PC-3 (cell line): ENCODE measurements at regions of chr10 and their contacts with region 1.

Region 1: GRCh38 chr10:10804998-10805740 is 212.5 kb upstream of the CELF2 start:
- DNase-seq: peak; percentile 67
- ATAC-seq: peak; percentile 89
- H3K4me3 ChIP-seq: no peak overlapping the region
- H3K27ac ChIP-seq: peak overlapping the region; percentile 53
- H3K4me1 ChIP-seq: peaks cover 9% of the 10 kb centered on the region; the same call in 1 of the 2 replicates
- H3K27me3 ChIP-seq: no peaks in the 10 kb centered on the region
- CTCF ChIP-seq: no peak

Region 2: DNA sequence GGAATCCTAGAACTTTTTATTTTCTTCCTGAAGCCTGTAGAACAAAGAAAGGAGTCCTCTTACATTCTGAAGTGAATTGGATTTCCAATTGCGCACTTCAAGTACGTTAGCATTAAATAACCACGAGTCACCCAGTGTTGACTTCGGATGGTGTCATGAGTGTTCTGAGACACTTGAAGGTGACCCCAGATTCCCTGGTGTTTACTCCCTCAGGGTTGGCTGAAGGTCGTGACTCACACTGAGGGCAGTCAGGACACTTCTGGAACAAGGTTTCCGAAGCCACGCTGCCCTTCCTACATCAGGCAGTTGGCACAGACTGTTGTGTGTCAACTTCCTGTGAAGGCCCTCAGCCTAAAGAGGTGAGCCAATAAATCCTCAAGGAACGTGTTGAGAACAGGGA is 25.9 kb after region 1 on chr10:
- CTCF ChIA-PET with region 1: no interaction called
- POLR2A ChIA-PET with region 1: no interaction called
- intact Hi-C with region 1: loop called (anchors 2 kb)
- DNase-seq: peak; percentile 4
- ATAC-seq: no peak; the same call in 1 of the 2 replicates
- H3K4me3 ChIP-seq: no peak overlapping the region
- H3K27ac ChIP-seq: peak overlapping the region; percentile 71
- H3K4me1 ChIP-seq: no peaks in the 10 kb centered on the region
- H3K27me3 ChIP-seq: no peaks in the 10 kb centered on the region
- CTCF ChIP-seq: no peak